Mammary epithelial cell (primary cell): ENCODE measurements at regions of chr9 and their contacts with region 1.

Region 1: DNA sequence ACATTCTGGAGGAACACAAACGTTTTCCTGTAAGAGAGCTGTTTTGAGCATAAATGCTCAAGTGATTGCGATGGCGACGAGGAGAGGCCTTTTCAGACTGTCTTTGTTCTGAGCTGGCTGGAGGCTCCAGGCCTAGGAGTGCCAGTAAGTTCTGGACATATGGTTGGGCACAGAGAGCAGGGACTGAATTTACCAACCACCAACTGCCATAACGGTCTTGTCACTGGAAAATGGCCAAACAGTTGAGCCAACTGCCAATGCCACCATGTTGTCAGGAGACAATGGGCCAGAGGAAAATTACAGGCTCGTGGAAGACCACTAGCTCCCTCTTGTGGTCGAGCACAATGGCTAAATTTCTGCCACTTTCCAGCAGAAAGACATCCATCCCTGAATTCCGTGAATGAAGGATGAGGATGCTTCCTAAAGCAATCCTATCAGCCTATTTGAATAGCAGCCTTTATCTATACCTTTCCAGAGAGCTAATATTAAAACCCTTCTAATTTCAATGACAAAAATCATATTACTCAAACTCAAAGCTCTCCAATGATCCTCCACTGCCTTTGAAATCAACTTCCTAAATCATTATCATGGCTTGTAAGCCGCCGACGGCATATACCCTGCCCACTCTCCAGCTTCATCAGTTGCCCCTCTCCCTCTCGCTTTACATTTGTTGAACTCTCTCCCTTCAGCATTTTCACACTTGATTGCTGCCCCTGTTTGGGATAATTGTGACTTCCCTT is 66.9 kb upstream of the GLIS3 start:
- DNase-seq: peak; percentile 39
- H3K4me3 ChIP-seq: no peak overlapping the region
- H3K27ac ChIP-seq: no peak overlapping the region
- H3K4me1 ChIP-seq: no peaks in the 10 kb centered on the region
- H3K27me3 ChIP-seq: no peaks in the 10 kb centered on the region
- CTCF ChIP-seq: peak; percentile 85 to 91

Region 2: GRCh38 chr9:2857564-2858198 is 1509.1 kb before region 1 on chr9:
- CTCF ChIA-PET with region 1: no interaction called
- dilution Hi-C with region 1: no loop called
- in situ Hi-C with region 1: loop called in 1 of 2 experiments (anchors 25 kb)
- intact Hi-C with region 1: loop called (anchors 5 kb)
- DNase-seq: peak; percentile 54
- H3K4me3 ChIP-seq: no peak overlapping the region
- H3K27ac ChIP-seq: no peak overlapping the region
- H3K4me1 ChIP-seq: no peaks in the 10 kb centered on the region
- H3K27me3 ChIP-seq: peaks cover 4% of the 10 kb centered on the region
- CTCF ChIP-seq: peak; percentile 82 to 94

Region 3: DNA sequence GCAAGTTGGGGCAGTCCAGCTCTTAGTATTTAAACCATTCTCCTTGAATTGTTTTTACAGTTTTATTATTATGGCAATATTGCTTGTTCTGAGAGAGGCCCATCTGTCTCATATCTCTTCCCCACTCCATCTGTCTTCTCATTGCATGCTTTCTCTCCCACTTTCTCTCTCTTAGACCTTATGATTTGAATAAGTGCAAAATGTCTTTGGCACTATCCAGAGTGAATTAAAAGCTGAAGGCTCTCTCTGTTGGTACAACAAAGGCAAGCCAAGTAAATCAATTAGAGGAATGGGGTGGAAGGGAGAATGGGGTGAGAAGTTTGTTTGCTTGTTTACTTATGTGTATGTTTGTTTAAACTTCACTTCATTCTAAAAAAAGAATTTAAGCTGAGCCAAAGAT is 645.7 kb before region 1 on chr9:
- CTCF ChIA-PET with region 1: no interaction called
- dilution Hi-C with region 1: no loop called
- in situ Hi-C with region 1: loop called in 1 of 2 experiments (anchors 10 kb)
- intact Hi-C with region 1: no loop called
- DNase-seq: no peak
- H3K4me3 ChIP-seq: no peak overlapping the region
- H3K27ac ChIP-seq: no peak overlapping the region
- H3K4me1 ChIP-seq: no peaks in the 10 kb centered on the region
- H3K27me3 ChIP-seq: no peaks in the 10 kb centered on the region
- CTCF ChIP-seq: no peak

Region 4: DNA sequence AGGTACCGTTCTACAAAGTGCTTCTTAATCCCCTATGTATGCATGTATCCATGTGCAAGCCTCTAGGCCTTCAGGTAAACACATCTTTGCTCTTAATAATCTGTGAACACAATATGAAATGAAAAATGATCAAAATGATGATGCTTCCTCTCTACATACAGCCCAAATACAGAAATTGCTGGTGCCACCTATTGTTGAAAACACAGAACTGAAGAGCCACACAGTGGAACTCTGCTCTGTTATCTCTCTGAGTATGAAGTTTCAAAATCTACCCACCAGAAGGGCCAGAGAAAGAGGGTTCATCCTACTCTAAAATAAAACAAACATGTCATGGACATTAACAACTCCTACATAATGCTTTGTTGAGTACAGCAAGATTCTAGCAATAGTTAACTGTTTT is 138.2 kb before region 1 on chr9:
- CTCF ChIA-PET with region 1: no interaction called
- dilution Hi-C with region 1: no loop called
- in situ Hi-C with region 1: no loop called
- intact Hi-C with region 1: loop called (anchors 5 kb)
- DNase-seq: peak; percentile 20
- H3K4me3 ChIP-seq: no peak overlapping the region
- H3K27ac ChIP-seq: no peak overlapping the region
- H3K4me1 ChIP-seq: peaks cover 16% of the 10 kb centered on the region
- H3K27me3 ChIP-seq: no peaks in the 10 kb centered on the region
- CTCF ChIP-seq: peak; percentile 53 to 67

Region 5: GRCh38 chr9:4315582-4316215 is 51.1 kb before region 1 on chr9:
- CTCF ChIA-PET with region 1: interaction called, 3 read pairs
- dilution Hi-C with region 1: no loop called
- in situ Hi-C with region 1: loop called in 1 of 2 experiments (anchors 10 kb)
- intact Hi-C with region 1: loop called (anchors 1 kb)
- DNase-seq: peak; percentile 50
- H3K4me3 ChIP-seq: no peak overlapping the region
- H3K27ac ChIP-seq: no peak overlapping the region
- H3K4me1 ChIP-seq: no peaks in the 10 kb centered on the region
- H3K27me3 ChIP-seq: no peaks in the 10 kb centered on the region
- CTCF ChIP-seq: peak; percentile 86 to 92